ENCODE measurements at regions of chr10 and their contacts with region 1.

Region 1: DNA sequence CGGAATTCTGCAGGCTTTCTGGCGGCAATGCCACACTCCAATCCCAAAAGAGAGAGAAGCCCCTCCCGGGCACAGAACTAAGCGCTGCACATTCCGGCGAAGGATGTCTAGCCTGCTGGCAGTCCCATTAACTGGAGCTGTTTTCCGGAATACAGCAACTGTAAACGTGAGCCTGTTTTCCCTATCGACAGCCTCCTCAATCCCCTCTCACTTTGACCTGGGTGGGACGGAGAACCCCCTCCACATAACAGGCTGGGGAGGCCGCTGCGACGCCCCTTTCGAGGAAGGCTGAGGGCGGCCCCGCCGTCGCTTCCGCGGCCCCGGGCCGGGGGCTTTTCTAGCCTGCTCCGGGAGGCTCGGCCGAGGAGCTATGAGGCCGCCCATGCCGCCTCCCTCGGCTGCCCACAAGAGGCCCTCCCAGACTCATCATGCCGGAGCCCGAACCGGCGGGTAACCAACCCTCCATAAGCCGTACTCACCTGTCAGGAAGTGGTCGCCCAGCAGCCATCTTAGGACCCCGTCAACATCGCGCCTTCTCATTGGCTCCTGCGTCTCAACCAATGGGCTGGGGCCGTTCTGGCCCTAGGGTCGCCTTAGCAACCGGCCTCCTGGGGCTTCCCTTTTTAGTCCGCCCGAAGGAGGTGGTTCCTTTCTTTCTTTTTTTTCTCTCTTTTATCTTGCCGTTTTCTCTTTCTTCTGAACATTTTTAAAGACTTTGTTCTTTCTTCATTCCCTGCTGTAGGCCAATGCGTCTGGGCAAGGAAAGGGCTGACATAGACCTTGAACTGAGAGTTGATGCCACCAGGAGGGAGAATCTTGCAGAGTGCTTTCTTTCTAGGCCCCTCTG is at the start of gene FAM204A:
- DNase-seq: peak; percentile 93
- ATAC-seq: peak; percentile 98
- H3K4me3 Mint-ChIP-seq: peak within 1 kb of the TSS; percentile 96
- H3K27ac Mint-ChIP-seq: peak within 1 kb of the TSS; percentile 96
- H3K4me1 Mint-ChIP-seq: peaks cover 46% of the 10 kb centered on the region
- H3K27me3 Mint-ChIP-seq: peaks cover 2% of the 10 kb centered on the region
- CTCF ChIP-seq: no peak
- total RNA-seq, gene FAM204A: 70.1 and 71.8 TPM in 2 replicates

Region 2: GRCh38 chr10:116849248-116850057 is 1492.6 kb before region 1 on chr10 and contains the start of gene ENO4:
- CTCF ChIA-PET with region 1: no interaction called
- POLR2A ChIA-PET with region 1: no interaction called
- intact Hi-C with region 1: loop called (anchors 5 kb)
- DNase-seq: peak; percentile 44
- ATAC-seq: peak; percentile 58
- H3K4me3 Mint-ChIP-seq: peak within 1 kb of the TSS; percentile 86
- H3K27ac Mint-ChIP-seq: peak within 1 kb of the TSS; percentile 90
- H3K4me1 Mint-ChIP-seq: peaks cover 39% of the 10 kb centered on the region
- H3K27me3 Mint-ChIP-seq: peaks cover 13% of the 10 kb centered on the region
- CTCF ChIP-seq: no peak
- total RNA-seq, gene ENO4: 0.07 TPM in 1 of 2 replicates, not detected in the other

Region 3: GRCh38 chr10:117375360-117376178 is 966.4 kb before region 1 on chr10 and contains the start of gene PDZD8:
- CTCF ChIA-PET with region 1: no interaction called
- POLR2A ChIA-PET with region 1: no interaction called
- intact Hi-C with region 1: loop called (anchors 1 kb)
- DNase-seq: peak; percentile 96
- ATAC-seq: peak; percentile 89
- H3K4me3 Mint-ChIP-seq: peak within 1 kb of the TSS; percentile 93
- H3K27ac Mint-ChIP-seq: peak within 1 kb of the TSS; percentile 75
- H3K4me1 Mint-ChIP-seq: peaks cover 35% of the 10 kb centered on the region
- H3K27me3 Mint-ChIP-seq: peaks cover 17% of the 10 kb centered on the region
- CTCF ChIP-seq: no peak
- total RNA-seq, gene PDZD8: 13.2 and 13.7 TPM in 2 replicates

Region 4: GRCh38 chr10:118046395-118047156 is 295.4 kb before region 1 on chr10 and contains the start of gene RAB11FIP2:
- CTCF ChIA-PET with region 1: no interaction called
- POLR2A ChIA-PET with region 1: no interaction called
- intact Hi-C with region 1: loop called (anchors 1 kb)
- DNase-seq: peak; percentile 98
- ATAC-seq: peak; percentile 92
- H3K4me3 Mint-ChIP-seq: peak within 1 kb of the TSS; percentile 89
- H3K27ac Mint-ChIP-seq: peak within 1 kb of the TSS; percentile 66
- H3K4me1 Mint-ChIP-seq: peaks cover 38% of the 10 kb centered on the region
- H3K27me3 Mint-ChIP-seq: no peaks in the 10 kb centered on the region
- CTCF ChIP-seq: no peak
- total RNA-seq, gene RAB11FIP2: 20.4 and 33.2 TPM in 2 replicates

Region 5: GRCh38 chr10:118300320-118300719 is 41.7 kb before region 1 on chr10:
- CTCF ChIA-PET with region 1: no interaction called
- POLR2A ChIA-PET with region 1: no interaction called
- intact Hi-C with region 1: no loop called
- DNase-seq: no peak
- ATAC-seq: no peak
- H3K4me3 Mint-ChIP-seq: no peak overlapping the region
- H3K27ac Mint-ChIP-seq: no peak overlapping the region
- H3K4me1 Mint-ChIP-seq: no peaks in the 10 kb centered on the region
- H3K27me3 Mint-ChIP-seq: no peaks in the 10 kb centered on the region
- CTCF ChIP-seq: no peak

Region 6: DNA sequence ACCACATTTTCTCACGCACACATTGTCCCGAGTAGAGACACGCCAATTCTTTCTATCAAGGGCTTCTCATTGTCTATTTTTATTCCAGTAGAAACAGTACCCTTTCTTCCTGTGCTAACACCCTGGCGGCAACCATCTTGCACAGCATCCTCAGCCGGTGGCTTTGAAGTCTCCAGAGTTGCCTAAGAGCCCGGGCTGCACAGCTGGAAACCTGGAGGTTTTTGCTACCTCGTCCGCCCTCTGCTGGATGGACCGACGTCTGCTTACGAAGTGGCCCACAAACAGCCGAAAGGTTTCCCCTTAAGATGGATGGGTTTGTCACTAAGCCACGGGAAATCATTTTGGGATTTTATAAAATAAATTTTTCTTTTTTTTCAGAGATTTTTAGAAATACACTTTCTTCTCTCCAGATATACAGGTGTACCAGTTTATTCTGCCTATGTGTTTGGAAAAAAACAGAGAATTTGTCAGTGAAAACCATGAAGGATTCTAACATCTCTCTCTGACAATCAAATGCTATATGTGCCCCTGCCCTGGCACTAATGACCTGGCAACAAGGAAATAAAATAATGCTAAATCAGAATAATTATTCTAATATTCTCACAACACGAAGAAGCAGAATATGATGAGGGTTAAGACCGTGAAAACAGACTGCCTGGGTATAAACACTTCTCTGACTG is 81.9 kb after region 1 on chr10:
- CTCF ChIA-PET with region 1: no interaction called
- POLR2A ChIA-PET with region 1: no interaction called
- intact Hi-C with region 1: loop called (anchors 5 kb)
- DNase-seq: peak; percentile 16
- ATAC-seq: peak; percentile 37
- H3K4me3 Mint-ChIP-seq: no peak overlapping the region
- H3K27ac Mint-ChIP-seq: no peak overlapping the region
- H3K4me1 Mint-ChIP-seq: no peaks in the 10 kb centered on the region
- H3K27me3 Mint-ChIP-seq: peaks cover 5% of the 10 kb centered on the region
- CTCF ChIP-seq: no peak

Region 7: DNA sequence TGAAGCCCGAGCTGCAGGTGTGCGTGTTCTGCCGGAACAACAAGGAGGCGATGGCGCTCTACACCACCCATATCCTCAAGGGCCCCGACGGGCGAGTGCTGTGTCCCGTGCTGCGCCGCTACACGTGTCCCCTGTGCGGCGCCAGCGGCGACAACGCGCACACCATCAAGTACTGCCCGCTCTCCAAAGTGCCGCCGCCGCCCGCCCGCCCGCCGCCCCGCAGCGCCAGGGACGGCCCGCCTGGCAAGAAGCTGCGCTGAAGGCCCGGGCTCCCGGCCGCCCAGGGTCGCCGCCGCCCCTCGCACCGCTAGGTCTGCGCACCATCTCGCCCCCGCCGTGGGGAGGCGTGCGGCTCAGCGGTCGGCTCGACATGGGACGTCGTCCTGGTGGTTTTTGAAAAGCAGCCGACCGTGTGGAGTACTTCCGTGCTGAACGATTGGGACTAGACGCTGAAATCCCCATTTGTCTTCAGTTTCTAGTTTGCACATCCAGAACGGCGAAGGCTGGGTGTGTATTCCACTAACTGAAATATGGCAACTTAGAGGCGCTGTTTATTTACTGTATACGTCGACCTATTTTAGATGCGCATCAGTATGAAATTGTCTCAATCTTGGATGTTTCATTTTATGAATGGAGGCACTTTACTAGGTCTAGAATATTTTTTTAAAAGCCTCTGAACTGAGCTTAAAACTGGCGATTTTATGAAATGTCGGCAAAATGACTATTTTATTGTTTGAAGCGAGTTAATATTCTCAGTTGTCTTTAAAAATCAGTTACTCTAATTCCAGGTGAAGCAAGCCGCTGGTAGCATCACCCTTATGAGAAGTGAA is 688.6 kb after region 1 on chr10:
- CTCF ChIA-PET with region 1: no interaction called
- POLR2A ChIA-PET with region 1: no interaction called
- intact Hi-C with region 1: loop called (anchors 5 kb)
- DNase-seq: peak; percentile 72
- ATAC-seq: peak; percentile 80
- H3K4me3 Mint-ChIP-seq: peak overlapping the region; percentile 75
- H3K27ac Mint-ChIP-seq: peak overlapping the region; percentile 68
- H3K4me1 Mint-ChIP-seq: peaks cover 22% of the 10 kb centered on the region
- H3K27me3 Mint-ChIP-seq: peaks cover 23% of the 10 kb centered on the region
- CTCF ChIP-seq: no peak

Region 8: GRCh38 chr10:119892188-119893065 is 1550.4 kb after region 1 on chr10 and contains the start of gene SEC23IP:
- CTCF ChIA-PET with region 1: no interaction called
- POLR2A ChIA-PET with region 1: no interaction called
- intact Hi-C with region 1: loop called (anchors 5 kb)
- DNase-seq: peak; percentile 84
- ATAC-seq: peak; percentile 98
- H3K4me3 Mint-ChIP-seq: peak within 1 kb of the TSS; percentile 94
- H3K27ac Mint-ChIP-seq: peak within 1 kb of the TSS; percentile 95
- H3K4me1 Mint-ChIP-seq: peaks cover 42% of the 10 kb centered on the region
- H3K27me3 Mint-ChIP-seq: no peaks in the 10 kb centered on the region
- CTCF ChIP-seq: no peak
- total RNA-seq, gene SEC23IP: 73.8 and 79.9 TPM in 2 replicates